Transverse colon (tissue), 4 donors: ENCODE measurements at regions of chr10 and their contacts with region 1.

Region 1: DNA sequence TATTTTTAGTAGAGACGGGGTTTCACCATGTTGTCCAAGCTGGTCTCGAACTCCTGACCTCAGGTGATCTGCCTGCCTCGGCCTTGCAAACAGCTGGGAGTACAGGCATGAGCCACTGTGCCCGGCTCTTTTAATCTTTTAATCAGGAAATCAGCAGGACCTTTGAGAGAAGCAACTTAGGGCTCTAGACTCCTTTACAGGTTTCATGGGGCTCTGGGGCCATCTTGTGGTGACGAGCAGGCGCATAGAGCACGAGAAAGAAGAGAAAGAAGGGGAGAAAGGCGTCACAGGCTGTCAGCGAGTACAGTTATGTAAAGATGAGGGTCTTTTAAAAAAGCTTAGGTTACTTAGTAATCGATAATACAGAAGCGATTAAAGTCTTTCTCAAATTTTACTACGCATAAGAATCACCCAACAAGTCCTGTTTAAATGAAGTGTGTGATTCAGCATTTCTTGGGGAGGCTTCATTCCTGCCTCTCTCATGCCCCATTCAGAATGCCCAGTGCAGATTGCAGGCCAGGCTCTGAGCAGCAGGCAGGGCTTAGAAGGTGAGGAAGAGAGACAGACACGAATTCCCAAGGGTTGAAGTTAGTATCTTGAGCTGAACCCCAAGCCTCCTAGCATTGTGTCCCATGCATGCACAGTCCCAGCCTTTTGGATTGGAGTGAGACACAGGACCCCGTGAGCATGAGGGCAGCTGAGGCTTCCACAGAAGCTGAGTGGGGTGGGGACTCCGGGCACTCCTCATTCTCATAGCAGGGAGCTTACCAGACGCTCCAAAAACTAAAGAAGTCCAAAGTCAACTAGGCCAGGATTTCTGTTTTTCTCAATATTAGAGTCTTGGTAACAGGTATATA is 23.6 kb upstream of the PFKP start:
- DNase-seq: peak; percentile 72
- H3K4me3 ChIP-seq: no peak overlapping the region
- H3K27ac ChIP-seq: peak overlapping the region in 2 of 4 donors; percentile 34 to 49
- H3K4me1 ChIP-seq: peaks cover 8 to 20% (median 12%) of the 10 kb centered on the region in 4 donors
- H3K27me3 ChIP-seq: no peaks in the 10 kb centered on the region
- CTCF ChIP-seq: peak; percentile 58 to 74 (median 67)
- EP300 ChIP-seq: no peak
- POLR2A ChIP-seq: no peak

Region 2: DNA sequence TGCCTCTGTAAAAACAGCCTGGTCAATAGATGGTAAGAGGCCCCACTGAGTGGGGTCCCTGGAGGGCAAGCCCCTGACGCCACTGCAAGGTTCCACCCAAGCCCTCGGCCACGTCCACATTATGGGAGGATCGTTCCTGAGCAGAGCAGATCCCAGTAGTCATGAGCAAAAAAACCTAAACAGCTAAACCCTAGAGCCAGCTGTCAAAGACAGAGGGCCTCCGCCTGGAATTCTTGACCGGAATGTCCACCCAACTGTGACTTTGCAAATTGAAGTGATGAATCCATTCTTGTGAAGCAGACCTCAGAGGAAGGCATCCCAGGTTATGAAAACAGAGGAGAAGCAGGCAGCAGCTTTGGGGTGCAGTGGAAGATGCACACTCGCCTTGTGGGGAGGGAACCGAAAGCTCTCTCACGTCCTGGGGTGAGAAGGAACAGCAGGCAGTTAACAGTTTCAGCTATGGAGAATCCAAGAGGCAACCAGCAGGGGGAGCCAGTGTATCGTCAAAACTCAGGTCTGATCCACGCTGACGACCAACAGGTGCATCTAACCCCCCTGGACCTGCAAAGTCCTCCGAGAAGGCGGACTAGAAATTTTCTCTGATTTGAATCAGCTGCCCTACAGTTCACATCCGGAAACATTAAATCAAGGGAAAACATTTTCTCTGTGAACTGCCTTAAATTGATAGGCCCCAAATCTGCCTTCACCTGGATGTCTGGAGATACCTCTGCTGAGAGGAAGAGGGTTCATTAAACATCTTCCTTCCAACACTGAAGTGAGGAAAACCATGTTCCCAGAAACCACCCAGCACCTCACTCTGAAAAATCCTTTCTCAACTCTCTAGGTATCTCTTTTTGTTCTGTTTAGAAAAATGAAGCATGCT is 115.5 kb before region 1 on chr10:
- in situ Hi-C with region 1: loop called (anchors 5 to 25 kb)
- intact Hi-C with region 1: loop called (anchors 10 kb)
- DNase-seq: peak; percentile 76
- H3K4me3 ChIP-seq: no peak overlapping the region
- H3K27ac ChIP-seq: no peak overlapping the region
- H3K4me1 ChIP-seq: peaks cover 0 to 5% (median 0%) of the 10 kb centered on the region in 4 donors
- H3K27me3 ChIP-seq: no peaks in the 10 kb centered on the region
- CTCF ChIP-seq: peak; percentile 60 to 82 (median 69)
- EP300 ChIP-seq: no peak
- POLR2A ChIP-seq: no peak

Region 3: GRCh38 chr10:2938869-2939268 is 104.9 kb before region 1 on chr10:
- in situ Hi-C with region 1: loop called (anchors 5 to 25 kb)
- intact Hi-C with region 1: loop called (anchors 10 kb)
- DNase-seq: no peak
- H3K4me3 ChIP-seq: no peak overlapping the region
- H3K27ac ChIP-seq: no peak overlapping the region
- H3K4me1 ChIP-seq: no peaks in the 10 kb centered on the region
- H3K27me3 ChIP-seq: peaks cover 12% of the 10 kb centered on the region
- CTCF ChIP-seq: no peak
- EP300 ChIP-seq: no peak
- POLR2A ChIP-seq: no peak

Region 4: DNA sequence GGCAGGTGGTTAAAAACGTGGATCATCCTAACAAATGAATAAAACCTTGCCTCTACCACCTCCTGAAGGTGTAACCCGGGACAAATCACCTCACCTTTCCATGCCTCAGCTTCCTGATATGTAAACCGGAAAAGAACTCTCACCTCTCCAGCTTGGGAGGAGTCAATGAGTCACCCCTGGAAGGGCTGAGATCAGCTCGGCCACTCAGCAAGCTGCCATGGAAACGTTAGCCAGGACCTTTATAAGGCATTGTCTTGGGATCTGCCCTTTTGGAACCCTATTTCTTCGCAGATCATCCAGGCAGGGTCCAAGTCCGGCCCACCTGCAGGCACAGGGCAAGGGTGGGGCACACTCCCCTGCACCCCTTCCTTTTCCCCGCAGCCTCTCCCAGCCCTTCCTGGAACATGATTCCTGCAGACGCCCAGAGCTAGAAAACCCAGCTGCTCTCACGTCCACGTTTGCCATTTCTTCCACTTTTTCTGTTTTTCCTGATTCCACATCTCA is 58.0 kb before region 1 on chr10:
- in situ Hi-C with region 1: no loop called
- intact Hi-C with region 1: no loop called
- DNase-seq: peak; percentile 75
- H3K4me3 ChIP-seq: peak overlapping the region in 2 of 4 donors; percentile 5 to 35
- H3K27ac ChIP-seq: peak overlapping the region; percentile 73 to 81 (median 76)
- H3K4me1 ChIP-seq: peaks cover 0 to 20% (median 15%) of the 10 kb centered on the region in 4 donors
- H3K27me3 ChIP-seq: peaks cover 4% of the 10 kb centered on the region
- CTCF ChIP-seq: peak in 1 of 5 experiments; percentile 9
- EP300 ChIP-seq: no peak
- POLR2A ChIP-seq: peak; percentile 54

Region 5: DNA sequence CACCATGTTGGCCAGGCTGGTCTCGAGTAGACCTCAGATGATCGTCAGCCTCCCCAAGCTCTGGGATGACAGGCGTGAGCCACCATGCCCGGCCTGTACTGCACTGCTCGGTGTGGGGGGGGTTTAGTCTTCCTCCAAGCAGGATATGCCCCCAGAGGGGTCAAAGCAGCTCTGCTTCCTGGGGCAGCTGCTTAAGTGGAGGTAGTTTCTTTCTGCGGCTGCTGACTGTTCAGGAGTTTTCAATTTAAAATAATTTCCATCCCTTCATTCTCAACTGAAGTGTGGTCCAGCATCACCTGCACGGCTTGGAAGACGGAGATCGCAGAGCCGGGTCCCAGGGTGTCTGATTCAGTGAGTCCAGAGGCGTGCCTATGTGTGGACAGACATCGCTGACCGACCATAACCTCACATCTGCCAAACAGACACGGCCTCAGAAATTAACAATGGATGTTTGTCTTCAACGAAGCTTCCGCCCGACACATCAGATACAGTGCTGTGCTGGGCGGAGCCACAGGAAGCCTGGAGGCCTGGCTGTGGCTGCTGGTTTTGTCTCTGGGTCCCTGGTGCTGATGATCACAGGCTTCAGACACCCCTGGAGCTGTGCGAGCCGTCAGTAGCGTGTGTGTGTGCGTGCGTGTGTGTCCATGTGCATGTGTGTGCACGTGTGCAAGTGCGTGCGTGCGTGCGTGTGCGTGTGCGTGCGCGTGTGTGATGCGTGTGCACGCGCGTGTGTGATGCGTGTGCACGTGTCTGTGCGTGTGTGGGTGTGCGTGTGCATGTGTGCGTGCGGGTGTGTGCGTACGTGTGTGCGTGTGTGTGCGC is 355.3 kb after region 1 on chr10:
- in situ Hi-C with region 1: no loop called
- intact Hi-C with region 1: no loop called
- DNase-seq: no peak
- H3K4me3 ChIP-seq: no peak overlapping the region
- H3K27ac ChIP-seq: peak overlapping the region in 2 of 4 donors; percentile 36 to 39
- H3K4me1 ChIP-seq: peaks cover 0 to 5% (median 0%) of the 10 kb centered on the region in 4 donors
- H3K27me3 ChIP-seq: no peaks in the 10 kb centered on the region
- CTCF ChIP-seq: no peak
- EP300 ChIP-seq: no peak
- POLR2A ChIP-seq: no peak